Psoas muscle (tissue), 8 donors: ENCODE measurements at regions of chr9 and their contacts with region 1.

Region 1: DNA sequence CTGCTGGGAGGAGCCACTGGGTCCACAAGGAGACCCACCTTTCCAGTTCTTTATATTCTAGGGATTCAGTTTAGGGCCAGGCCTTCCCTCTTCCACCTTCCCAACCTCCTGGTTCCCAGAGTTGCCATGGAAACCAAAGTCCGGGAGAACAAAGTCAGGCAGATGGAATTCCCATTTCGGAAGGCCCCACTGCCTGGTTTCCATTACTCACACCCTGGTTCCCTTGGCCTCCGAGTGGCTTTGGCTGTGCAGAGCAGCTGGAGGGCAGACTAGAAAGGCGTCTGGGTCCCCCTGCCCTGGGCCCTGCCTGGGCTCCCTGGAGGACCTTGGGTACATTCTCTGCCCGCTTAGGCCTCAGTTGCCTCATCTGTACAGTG is 136.1 kb downstream of the RGS3 start:
- DNase-seq: peak in 1 of 2 donors; percentile 55
- ATAC-seq: peak in 2 of 4 donors; percentile 17 to 38
- H3K4me3 ChIP-seq: no peak overlapping the region
- H3K27ac ChIP-seq: peak overlapping the region; percentile 37
- H3K4me1 ChIP-seq: peaks cover 54% of the 10 kb centered on the region
- H3K27me3 ChIP-seq: no peaks in the 10 kb centered on the region
- CTCF ChIP-seq: no peak

Region 2: GRCh38 chr9:113564498-113565237 is 35.0 kb before region 1 on chr9:
- intact Hi-C with region 1: no loop called
- DNase-seq: peak; percentile 63 to 72
- ATAC-seq: peak; percentile 39 to 58 (median 44)
- H3K4me3 ChIP-seq: peak overlapping the region; percentile 58
- H3K27ac ChIP-seq: peak overlapping the region; percentile 74
- H3K4me1 ChIP-seq: peaks cover 47% of the 10 kb centered on the region
- H3K27me3 ChIP-seq: no peaks in the 10 kb centered on the region
- CTCF ChIP-seq: no peak

Region 3: DNA sequence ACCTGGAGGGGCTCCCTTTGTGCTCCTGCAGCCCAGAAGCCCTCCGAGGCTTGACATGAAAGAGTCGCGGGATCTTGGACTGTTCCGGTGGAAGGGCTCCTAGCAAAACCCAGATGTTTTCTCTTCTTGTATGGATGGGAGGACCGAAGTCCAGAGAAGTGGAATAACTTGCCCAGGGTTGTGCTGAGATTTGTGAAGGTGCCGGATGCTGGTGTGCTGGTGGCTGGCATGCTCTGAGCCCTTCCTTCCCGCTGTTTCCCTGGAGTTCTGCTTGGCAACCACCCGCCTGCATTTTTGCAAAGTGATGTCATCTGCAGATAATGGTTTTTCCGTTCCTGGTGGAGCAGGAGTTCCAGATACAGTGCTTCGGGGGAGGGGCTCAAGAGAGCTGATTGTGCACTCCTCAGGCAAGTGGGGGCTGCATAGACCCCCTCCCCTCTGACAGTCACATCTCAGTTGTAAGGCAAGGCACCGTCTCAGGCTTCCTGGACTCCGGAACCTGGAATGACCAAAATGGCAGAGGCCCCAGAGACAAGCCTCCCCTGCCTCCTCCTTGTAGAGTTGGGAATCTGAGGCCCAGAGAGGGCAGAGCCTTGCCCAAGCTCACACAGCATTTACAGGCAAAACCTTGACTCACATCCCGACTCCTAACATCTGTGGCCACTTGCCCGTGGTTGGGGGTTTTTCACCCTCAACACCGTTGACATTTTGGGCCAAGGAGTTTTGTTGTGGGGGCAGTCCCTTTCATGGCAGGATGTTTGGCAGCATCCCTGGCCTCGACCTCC is 20.9 kb after region 1 on chr9:
- intact Hi-C with region 1: loop called in 1 of 2 experiments (anchors 2 kb)
- DNase-seq: peak; percentile 72 to 74
- ATAC-seq: peak; percentile 30 to 70 (median 48)
- H3K4me3 ChIP-seq: peak overlapping the region; percentile 12
- H3K27ac ChIP-seq: peak overlapping the region; percentile 79
- H3K4me1 ChIP-seq: peaks cover 37% of the 10 kb centered on the region
- H3K27me3 ChIP-seq: no peaks in the 10 kb centered on the region
- CTCF ChIP-seq: no peak

Region 4: DNA sequence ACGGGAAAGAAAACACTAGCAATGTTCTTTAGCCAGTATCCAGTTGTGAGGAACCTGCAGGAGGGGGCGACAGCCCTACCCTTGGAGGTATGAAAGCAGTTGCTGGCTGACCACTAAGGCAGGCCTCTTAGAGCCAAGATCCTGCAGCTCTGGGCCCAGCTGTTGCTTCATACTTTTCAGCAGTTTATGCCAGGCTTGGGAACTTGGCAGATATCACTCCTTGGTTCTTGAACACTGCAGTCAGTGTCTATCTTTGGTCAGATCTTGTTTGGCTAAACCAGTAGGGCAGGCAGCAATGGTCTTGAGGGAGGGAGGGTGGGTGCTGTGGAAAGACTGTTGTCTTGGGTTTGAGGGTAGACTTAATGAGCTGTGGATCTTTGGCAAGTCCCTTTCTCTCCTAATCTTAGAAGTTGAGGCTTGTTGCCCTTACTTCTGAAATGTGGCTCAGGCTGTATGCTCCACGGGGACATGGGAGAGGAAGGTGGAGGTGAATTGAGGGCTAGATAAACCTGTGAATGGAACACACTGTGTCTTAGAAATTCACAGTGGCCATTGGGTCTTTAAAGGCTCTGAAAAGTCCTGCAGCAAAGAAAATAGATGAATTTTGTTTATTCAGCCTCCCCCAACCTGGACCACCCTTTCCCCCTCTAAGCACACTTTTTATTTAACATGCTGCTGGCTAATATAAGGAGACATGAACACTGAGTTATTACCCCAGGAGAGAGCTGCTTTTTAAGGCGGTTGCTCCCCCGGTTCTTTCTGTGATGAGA is 314.0 kb after region 1 on chr9:
- intact Hi-C with region 1: no loop called
- DNase-seq: peak; percentile 43 to 81
- ATAC-seq: peak; percentile 96 to 99 (median 98)
- H3K4me3 ChIP-seq: peak overlapping the region; percentile 7
- H3K27ac ChIP-seq: peak overlapping the region; percentile 85
- H3K4me1 ChIP-seq: peaks cover 38% of the 10 kb centered on the region
- H3K27me3 ChIP-seq: no peaks in the 10 kb centered on the region
- CTCF ChIP-seq: no peak